Panc1 (cell line): ENCODE measurements at regions of chr10 and their contacts with region 1.

Region 1: DNA sequence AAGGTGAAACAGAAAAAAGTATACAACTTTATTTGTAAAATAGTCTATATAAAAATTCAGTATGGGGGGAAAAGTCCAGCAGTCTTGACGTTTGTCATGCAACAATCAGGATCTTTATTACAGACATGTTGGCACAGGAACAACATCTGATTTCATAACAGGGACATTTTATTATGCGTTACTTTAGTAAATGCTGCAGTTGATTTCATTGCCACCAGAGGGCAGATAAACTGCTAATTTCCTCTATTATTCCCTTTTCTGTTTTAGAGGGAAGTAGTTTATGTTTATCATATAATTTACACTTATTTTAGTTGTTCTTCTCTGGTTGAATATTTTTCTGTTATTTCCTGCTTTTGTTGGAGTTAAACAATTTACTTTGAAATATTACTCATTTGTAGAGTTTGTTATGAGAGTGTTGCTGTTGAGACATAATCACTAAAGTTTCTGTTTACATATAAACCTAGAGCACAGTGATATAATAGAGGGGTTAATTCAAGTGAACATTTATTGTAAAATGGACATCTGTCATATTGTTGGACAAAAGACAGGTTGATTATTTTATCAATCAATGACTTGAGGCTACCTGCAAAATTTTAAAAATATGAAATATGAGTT is 3.3 kb downstream of the PLXDC2 start:
- DNase-seq: peak; percentile 15
- ATAC-seq: no peak
- H3K4me3 ChIP-seq: no peak overlapping the region
- H3K27ac ChIP-seq: no peak overlapping the region
- H3K4me1 ChIP-seq: no peaks in the 10 kb centered on the region
- H3K27me3 ChIP-seq: peaks cover 14% of the 10 kb centered on the region; the same call in 1 of the 2 replicates
- CTCF ChIP-seq: peak; percentile 64; the same call in 1 of the 2 replicates

Region 2: GRCh38 chr10:20768843-20769242 is 949.3 kb after region 1 on chr10:
- CTCF ChIA-PET with region 1: no interaction called
- POLR2A ChIA-PET with region 1: no interaction called
- in situ Hi-C with region 1: no loop called
- intact Hi-C with region 1: loop called (anchors 5 kb)
- DNase-seq: no peak
- ATAC-seq: no peak
- H3K4me3 ChIP-seq: no peak overlapping the region
- H3K27ac ChIP-seq: no peak overlapping the region
- H3K4me1 ChIP-seq: no peaks in the 10 kb centered on the region
- H3K27me3 ChIP-seq: no peaks in the 10 kb centered on the region
- CTCF ChIP-seq: peak; percentile 16; the same call in 1 of the 2 replicates